ENCODE measurements at regions of chr18 and their contacts with region 1.

Region 1: GRCh38 chr18:23416298-23416697 is 36.8 kb upstream of the RIOK3 start:
- DNase-seq: no peak
- H3K4me3 ChIP-seq: no peak overlapping the region
- H3K27ac ChIP-seq: no peak overlapping the region
- H3K4me1 ChIP-seq: no peaks in the 10 kb centered on the region
- H3K27me3 ChIP-seq: no peaks in the 10 kb centered on the region
- CTCF ChIP-seq: no peak
- POLR2A ChIP-seq: no peak

Region 2: DNA sequence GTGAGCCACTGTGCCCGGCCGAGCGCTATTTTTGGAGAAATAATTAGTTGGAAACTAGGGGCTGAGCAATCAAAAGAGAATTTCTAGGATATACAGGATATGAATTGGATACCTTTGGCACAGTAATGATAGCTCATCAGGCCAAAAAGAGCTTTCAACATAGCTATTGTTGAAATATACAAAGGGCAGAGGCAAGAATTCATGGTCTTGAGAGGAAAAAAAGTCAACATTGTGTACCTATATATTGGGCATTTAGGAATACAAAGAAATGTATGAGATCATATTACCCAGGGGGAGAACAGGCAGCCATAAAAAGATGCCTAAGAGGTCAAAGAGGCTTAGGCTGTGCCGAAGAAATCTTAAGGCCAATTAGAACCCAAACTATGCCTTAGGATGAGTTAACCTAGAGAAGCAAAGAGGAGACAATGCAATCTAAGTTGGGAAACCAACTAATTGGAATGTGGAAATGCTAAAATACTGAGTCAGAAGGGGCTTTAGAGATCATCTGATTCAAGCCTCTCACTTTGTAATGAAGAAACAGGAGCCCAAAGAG is 384.2 kb before region 1 on chr18:
- intact Hi-C with region 1: loop called (anchors 10 kb)
- DNase-seq: no peak
- H3K4me3 ChIP-seq: no peak overlapping the region
- H3K27ac ChIP-seq: no peak overlapping the region
- H3K4me1 ChIP-seq: no peaks in the 10 kb centered on the region
- H3K27me3 ChIP-seq: no peaks in the 10 kb centered on the region
- CTCF ChIP-seq: no peak
- POLR2A ChIP-seq: no peak

Region 3: GRCh38 chr18:23126376-23127056 is 289.8 kb before region 1 on chr18:
- intact Hi-C with region 1: loop called (anchors 5 kb)
- DNase-seq: no peak
- H3K4me3 ChIP-seq: no peak overlapping the region
- H3K27ac ChIP-seq: no peak overlapping the region
- H3K4me1 ChIP-seq: peaks cover 0 to 2% of the 10 kb centered on the region in 2 donors
- H3K27me3 ChIP-seq: no peaks in the 10 kb centered on the region
- CTCF ChIP-seq: no peak
- POLR2A ChIP-seq: no peak

Region 4: DNA sequence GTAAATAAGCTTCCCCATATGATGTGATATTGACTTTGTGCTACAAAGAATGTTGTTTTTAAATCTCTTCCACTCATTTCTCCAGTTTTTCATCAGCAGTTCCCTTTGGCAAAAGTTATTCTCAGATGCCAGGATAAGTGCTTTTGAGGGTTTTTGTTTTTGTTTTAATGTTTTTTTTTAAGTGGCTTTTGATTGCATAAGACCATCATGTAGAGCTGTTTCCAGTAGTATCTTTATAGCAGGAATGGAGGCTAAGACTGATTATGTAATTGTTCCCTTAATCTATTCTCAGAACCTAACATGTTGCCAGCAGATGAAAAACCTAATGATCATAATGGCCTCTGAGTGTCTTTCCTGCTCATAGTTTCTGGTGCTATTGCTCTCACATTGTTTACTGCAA is 203.1 kb before region 1 on chr18:
- intact Hi-C with region 1: loop called (anchors 10 kb)
- DNase-seq: no peak
- H3K4me3 ChIP-seq: no peak overlapping the region
- H3K27ac ChIP-seq: peak overlapping the region in 2 of 3 donors; percentile 6 to 43
- H3K4me1 ChIP-seq: peaks cover 21 to 34% of the 10 kb centered on the region in 2 donors
- H3K27me3 ChIP-seq: no peaks in the 10 kb centered on the region
- CTCF ChIP-seq: no peak
- POLR2A ChIP-seq: no peak